AG04449 (cell line): ENCODE measurements at regions of chr6 and their contacts with region 1.

Region 1: DNA sequence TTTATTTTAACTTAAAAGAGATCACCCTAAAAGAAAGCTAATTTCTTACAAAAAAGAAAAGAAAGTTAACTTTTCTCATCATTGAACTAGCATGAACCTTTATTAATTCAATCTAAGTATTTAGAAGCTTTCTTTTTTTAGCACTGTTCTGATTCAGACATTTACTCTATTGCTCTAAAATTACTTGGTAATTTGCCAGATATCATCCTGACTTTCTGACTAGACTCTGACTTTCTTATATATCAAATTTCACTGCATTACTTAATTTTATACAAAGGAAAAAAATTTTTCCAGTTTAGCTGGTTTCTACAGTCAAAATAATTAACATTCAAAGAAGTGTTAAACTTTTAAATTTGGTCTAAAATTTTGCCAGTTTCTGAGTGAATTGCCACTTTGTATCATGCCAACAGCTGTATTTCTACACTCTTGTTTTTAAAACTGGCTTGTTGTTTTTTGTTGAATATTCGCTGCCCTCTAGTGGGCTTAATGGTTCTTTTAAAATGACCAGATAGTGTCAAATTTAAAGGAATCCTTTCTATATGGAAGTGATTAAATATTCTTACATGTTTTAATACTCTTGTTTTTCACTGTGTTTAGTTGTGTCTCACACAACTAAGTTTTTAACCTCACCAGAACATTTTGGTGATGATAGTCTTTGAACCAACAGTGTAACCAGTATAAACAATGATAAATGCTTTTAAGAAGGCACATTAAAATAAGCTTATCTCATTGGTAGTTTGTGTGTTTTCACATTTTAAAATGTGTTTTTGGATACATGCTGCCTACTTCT is 102.0 kb downstream of the POPDC3 start:
- DNase-seq: no peak
- H3K4me3 ChIP-seq: no peak overlapping the region
- CTCF ChIP-seq: peak; percentile 4

Region 2: DNA sequence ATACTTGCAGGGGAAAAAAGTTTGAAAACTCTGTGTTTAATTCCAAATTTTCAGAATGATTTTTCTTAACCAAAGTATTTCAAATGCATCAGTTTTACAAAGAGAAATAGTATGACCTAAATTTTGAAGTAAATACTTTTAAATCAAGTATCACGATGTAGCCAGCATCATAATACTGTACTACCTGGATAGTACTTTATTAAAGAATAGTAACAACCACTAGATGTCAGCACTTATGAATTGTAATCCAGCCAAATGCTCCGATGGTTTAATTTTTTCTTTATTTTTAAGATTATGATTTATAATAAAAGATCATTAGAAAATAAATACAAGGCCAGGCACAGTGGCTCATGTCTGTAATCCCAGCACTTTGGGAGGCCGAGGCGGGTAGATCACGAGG is 180.9 kb before region 1 on chr6:
- CTCF ChIA-PET with region 1: interaction called, 58 read pairs
- POLR2A ChIA-PET with region 1: no interaction called
- DNase-seq: no peak
- H3K4me3 ChIP-seq: no peak overlapping the region
- CTCF ChIP-seq: no peak

Region 3: GRCh38 chr6:104940881-104941728 is 136.7 kb before region 1 on chr6:
- CTCF ChIA-PET with region 1: interaction called, 37 read pairs
- POLR2A ChIA-PET with region 1: no interaction called
- DNase-seq: no peak
- H3K4me3 ChIP-seq: peak overlapping the region; percentile 51
- CTCF ChIP-seq: peak; percentile 76

Region 4: DNA sequence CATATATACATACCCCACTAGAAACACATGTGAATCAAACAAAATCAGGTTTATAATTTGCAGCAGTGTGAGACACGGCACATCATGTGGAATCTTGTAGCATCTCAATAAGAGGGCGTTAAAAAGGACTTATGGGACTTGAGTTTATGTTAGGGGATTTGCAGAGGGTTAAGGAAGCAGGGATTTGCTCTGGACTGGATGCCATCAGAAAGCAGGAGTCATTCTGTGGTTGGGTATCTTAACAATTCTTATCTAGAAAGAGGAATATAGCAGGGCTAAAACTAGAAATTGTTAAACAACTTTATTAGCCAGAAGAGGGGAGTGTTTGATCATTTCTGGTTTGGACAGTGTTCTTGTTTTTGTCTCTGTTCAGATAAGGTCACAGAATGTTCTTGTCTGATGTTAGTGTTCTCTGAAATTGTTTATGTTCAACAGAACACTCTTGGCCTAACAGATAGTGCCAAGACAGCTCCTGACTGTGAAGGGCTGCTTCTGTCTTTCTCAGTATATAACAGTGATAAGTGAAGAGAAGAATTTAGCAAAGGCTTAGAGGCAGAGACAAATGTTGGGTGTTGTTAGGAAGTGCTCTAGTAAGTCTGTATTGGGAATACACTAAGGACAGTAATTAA is 81.7 kb before region 1 on chr6:
- CTCF ChIA-PET with region 1: interaction called, 106 read pairs
- POLR2A ChIA-PET with region 1: no interaction called
- DNase-seq: no peak
- H3K4me3 ChIP-seq: no peak overlapping the region
- CTCF ChIP-seq: no peak

Region 5: GRCh38 chr6:105001906-105002305 is 75.9 kb before region 1 on chr6:
- CTCF ChIA-PET with region 1: interaction called, 106 read pairs
- POLR2A ChIA-PET with region 1: no interaction called
- DNase-seq: no peak
- H3K4me3 ChIP-seq: no peak overlapping the region
- CTCF ChIP-seq: no peak

Region 6: DNA sequence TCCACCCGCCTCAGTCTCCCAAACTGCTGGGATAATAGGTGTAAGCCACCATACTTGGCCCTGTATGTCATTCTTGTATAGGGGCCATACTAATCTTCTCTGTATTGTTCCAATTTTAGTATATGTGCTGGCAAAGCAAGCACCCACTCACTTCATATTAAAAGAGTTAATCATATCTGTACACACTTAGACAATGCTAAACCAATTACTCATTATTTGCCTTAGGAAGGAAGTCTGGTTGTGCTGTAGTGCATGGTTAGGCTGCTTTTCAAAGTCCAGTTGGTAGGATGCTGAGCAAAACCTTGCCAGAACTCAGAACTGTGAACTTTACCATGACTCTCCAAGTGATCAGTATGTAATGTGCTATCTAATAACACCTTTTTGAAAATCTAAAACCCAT is 32.3 kb before region 1 on chr6:
- CTCF ChIA-PET with region 1: no interaction called
- POLR2A ChIA-PET with region 1: no interaction called
- DNase-seq: peak; percentile 16
- H3K4me3 ChIP-seq: no peak overlapping the region
- CTCF ChIP-seq: no peak

Region 7: DNA sequence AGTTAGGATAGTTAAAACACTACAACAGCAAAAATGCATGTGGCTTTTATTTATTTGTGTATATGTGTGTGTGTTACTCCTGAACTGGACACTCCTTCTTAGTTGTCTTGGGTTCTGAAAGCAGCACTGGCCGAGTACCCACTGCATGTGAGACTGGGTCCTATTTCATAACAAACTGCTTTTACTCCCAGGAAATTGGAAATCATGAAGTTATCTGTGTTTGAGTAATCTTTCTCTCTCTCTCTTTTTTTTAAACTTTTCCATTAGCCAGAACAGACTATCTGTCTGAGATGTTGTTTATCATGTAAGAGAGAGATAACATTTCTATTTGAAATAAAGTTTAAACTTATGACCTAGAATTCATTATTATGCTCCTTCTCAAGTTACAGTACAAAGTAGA is 10.5 kb before region 1 on chr6:
- CTCF ChIA-PET with region 1: interaction called, 12 read pairs
- POLR2A ChIA-PET with region 1: no interaction called
- DNase-seq: no peak
- H3K4me3 ChIP-seq: no peak overlapping the region
- CTCF ChIP-seq: no peak